Heart right ventricle (tissue), 16 donors: ENCODE measurements at regions of chr12 and their contacts with region 1.

Region 1: GRCh38 chr12:124369055-124369900 is 74.4 kb downstream of the RFLNA start:
- DNase-seq: peak; percentile 91 to 94
- ATAC-seq: peak; percentile 83 to 93 (median 88)
- H3K4me3 ChIP-seq: peak overlapping the region in 2 of 10 donors; percentile 4 to 18
- H3K27ac ChIP-seq: peak overlapping the region; percentile 81 to 96 (median 91)
- H3K4me1 ChIP-seq: peaks cover 45 to 83% (median 66%) of the 10 kb centered on the region in 9 donors
- H3K27me3 ChIP-seq: no peaks in the 10 kb centered on the region
- CTCF ChIP-seq: peak; percentile 17 to 69 (median 51)

Region 2: GRCh38 chr12:124655698-124656516 is 286.6 kb after region 1 on chr12:
- intact Hi-C with region 1: loop called in 1 of 10 experiments (anchors 2 kb)
- DNase-seq: peak; percentile 80 to 87
- ATAC-seq: peak; percentile 77 to 84 (median 83)
- H3K4me3 ChIP-seq: peak overlapping the region in 7 of 10 donors; percentile 13 to 38 (median 30)
- H3K27ac ChIP-seq: peak overlapping the region; percentile 68 to 96 (median 86)
- H3K4me1 ChIP-seq: peaks cover 24 to 61% (median 56%) of the 10 kb centered on the region in 9 donors
- H3K27me3 ChIP-seq: no peaks in the 10 kb centered on the region
- CTCF ChIP-seq: peak in 1 of 9 donors; percentile 14